H1 (cell line): ENCODE measurements at regions of chr19 and their contacts with region 1.

Region 1: DNA sequence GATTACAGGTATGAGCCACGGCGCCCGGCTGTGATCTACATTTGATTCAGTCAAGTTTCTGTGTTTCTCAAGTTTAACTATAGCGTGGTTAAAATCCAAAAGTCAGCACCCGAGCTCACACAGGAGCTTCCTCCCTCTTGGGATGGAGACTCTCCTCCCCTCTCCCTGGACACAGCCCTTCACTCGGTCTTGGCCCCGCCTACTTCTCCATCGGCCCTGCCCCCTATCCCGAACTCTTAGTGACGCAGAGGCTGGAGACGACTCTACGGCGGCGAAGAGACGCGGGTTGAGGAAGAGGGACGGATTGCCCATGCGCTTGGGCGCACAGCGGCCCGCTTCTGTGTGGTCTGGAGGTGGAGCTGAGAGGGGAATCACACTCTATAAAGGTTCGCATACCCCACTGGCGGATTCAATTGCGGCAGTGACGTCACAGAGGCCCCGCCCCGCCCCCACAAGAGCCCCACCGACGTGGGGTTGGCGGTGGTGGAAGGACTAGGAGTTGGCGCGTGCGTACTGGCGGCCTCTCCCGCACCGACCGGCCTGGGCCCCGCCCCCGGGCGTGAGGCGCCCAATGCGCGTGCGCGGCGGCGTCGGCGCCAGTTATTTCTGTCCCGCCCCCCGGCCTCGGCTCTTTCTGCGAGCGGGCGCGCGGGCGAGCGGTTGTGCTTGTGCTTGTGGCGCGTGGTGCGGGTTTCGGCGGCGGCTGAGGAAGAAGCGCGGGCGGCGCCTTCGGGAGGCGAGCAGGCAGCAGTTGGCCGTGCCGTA is at the start of gene TRIM28:
- DNase-seq: peak; percentile 91 to 99
- H3K4me3 ChIP-seq: peak within 1 kb of the TSS; percentile 89 to 100 (median 94)
- H3K27ac ChIP-seq: peak within 1 kb of the TSS; percentile 96
- H3K4me1 ChIP-seq: peaks cover 3 to 10% (median 5%) of the 10 kb centered on the region in 4 experiments; a peak in 6 of 7 replicates
- H3K27me3 ChIP-seq: peaks cover 0 to 24% (median 10%) of the 10 kb centered on the region in 4 experiments; a peak in 5 of 7 replicates
- CTCF ChIP-seq: no peak
- EP300 ChIP-seq: 0 out of 3 replicates have a peak, but pooled peaks of 1 of the 2 experiments have one; percentile 1
- POLR2A ChIP-seq: peak; percentile 93 to 95
- RAD21 ChIP-seq: no peak
- total RNA-seq, gene TRIM28: 1,398 and 1,433 TPM in 2 replicates

Region 2: GRCh38 chr19:58531034-58531840 is 12.8 kb before region 1 on chr19:
- CTCF ChIA-PET with region 1: no interaction called
- POLR2A ChIA-PET with region 1: interaction called, 650 read pairs
- DNase-seq: no peak
- H3K4me3 ChIP-seq: no peak overlapping the region
- H3K27ac ChIP-seq: no peak overlapping the region
- H3K4me1 ChIP-seq: no peaks in the 10 kb centered on the region
- H3K27me3 ChIP-seq: peaks cover 0 to 4% (median 0%) of the 10 kb centered on the region in 4 experiments; a peak in 1 of 7 replicates
- CTCF ChIP-seq: no peak
- EP300 ChIP-seq: no peak
- POLR2A ChIP-seq: no peak
- RAD21 ChIP-seq: no peak

Region 3: DNA sequence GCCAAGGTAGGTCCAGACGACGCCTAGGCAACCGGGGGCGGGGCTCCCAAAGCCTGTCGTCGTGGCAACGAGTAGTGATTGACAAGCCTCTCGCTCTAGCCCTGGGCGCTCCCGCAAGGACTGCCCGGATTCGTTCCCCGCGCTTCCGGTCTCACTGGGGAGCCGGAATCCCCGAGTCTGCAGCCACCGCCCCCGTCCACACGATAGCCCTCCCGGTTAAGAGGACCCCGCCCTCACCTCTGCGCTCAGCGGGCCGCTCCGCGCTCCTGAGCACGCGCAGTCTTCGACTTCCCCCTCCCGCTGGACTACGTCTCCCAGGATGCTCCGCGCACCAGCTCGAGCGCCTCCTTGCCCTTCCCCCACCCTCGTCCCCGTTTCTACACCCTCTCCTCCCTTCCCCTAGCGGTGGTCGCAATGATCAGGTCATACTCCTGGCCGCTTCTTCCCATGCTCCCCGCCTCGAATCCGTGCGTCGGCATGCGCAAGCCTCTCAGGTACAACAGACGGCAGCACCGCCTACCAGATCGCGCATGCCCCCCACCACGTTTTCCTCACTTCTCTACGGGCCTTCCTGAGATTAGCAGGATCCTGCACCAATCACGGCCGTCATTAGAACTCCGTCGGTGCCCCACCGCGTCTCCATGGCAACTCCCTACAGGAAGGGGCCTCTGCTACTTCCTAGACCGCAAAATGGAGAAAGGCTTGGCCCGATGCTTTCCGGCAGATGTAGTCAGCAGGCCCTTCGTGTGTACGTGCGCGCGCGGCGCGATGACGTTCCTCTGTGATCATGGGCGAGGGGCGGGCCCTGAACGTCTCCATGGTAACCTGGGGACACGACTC is 29.0 kb after region 1 on chr19 and contains the start of gene MZF1:
- CTCF ChIA-PET with region 1: interaction called, 3 read pairs
- POLR2A ChIA-PET with region 1: interaction called, 434 read pairs
- DNase-seq: peak; percentile 99 to 100
- H3K4me3 ChIP-seq: peak within 1 kb of the TSS; percentile 70 to 87 (median 78)
- H3K27ac ChIP-seq: peak within 1 kb of the TSS; percentile 98
- H3K4me1 ChIP-seq: peaks cover 0 to 11% (median 1%) of the 10 kb centered on the region in 4 experiments; a peak in 3 of 7 replicates
- H3K27me3 ChIP-seq: no peaks in the 10 kb centered on the region
- CTCF ChIP-seq: peak in 2 of 3 experiments; percentile 16 to 17; a peak in 2 of 4 replicates
- EP300 ChIP-seq: no peak
- POLR2A ChIP-seq: peak; percentile 2 to 77
- RAD21 ChIP-seq: no peak
- total RNA-seq, gene MZF1: 15.2 and 15.5 TPM in 2 replicates